BJ (cell line): ENCODE measurements at regions of chr5 and their contacts with region 1.

Region 1: GRCh38 chr5:57857696-57858095 is 375.1 kb upstream of the ACTBL2 start:
- DNase-seq: no peak
- H3K4me3 ChIP-seq: no peak overlapping the region
- H3K27me3 ChIP-seq: no peaks in the 10 kb centered on the region
- CTCF ChIP-seq: no peak

Region 2: GRCh38 chr5:57513785-57514184 is 343.9 kb before region 1 on chr5:
- CTCF ChIA-PET with region 1: no interaction called
- POLR2A ChIA-PET with region 1: interaction called, 16 read pairs
- DNase-seq: no peak
- H3K4me3 ChIP-seq: no peak overlapping the region
- H3K27me3 ChIP-seq: peaks cover 3% of the 10 kb centered on the region; the same call in 1 of the 2 replicates
- CTCF ChIP-seq: no peak

Region 3: GRCh38 chr5:57841676-57842363 is 15.9 kb before region 1 on chr5:
- CTCF ChIA-PET with region 1: no interaction called
- POLR2A ChIA-PET with region 1: no interaction called
- DNase-seq: peak; percentile 91
- H3K4me3 ChIP-seq: no peak overlapping the region
- H3K27me3 ChIP-seq: no peaks in the 10 kb centered on the region
- CTCF ChIP-seq: no peak